Posterior vena cava (tissue), 2 donors: ENCODE measurements at regions of chr9 and their contacts with region 1.

Region 1: DNA sequence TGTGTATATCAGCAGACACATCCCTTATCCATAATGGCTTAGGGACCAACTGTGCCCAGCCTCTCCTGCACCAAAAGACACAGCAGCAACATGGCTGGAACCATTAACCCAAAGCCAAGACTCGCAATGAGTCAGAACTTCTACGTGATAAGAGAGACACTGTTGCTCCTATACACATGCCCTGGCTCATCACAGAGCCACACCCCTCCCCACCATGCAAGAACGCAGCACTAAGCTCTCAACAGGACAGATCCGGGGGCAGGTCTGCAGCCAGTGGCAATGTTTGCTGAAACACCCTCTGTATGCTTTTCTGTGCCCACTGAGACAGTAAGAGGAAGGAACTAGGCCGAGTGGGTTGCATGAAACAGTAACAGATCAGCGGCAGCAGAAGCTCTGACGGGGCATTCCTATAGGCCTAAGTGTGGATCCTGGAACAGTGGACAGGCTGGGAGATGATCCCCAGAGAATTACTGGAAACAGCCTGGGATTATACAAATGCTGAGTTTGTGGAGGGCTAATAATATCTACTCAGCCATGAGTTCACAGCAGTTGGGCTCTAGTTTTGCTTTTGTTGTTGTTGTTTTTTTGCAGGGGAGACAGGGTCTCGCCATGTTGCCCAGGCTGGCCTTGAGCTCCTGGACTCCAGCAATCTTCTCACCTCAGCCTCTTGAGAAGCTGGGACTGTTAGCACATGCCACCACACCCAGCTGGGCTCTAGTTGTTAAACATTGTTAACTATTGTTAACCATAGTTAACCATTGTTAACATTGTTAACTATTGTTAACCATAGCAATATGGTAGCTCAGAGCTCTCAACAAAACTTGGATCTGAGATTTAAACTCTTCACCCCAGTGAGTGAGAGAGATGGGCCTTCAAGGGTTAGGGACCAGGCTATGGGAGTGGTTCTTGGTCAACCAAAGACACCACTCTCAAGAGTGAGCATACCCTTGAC is 41.0 kb downstream of the B4GALT1 start:
- DNase-seq: peak; percentile 77

Region 2: GRCh38 chr9:33092634-33093033 is 33.5 kb before region 1 on chr9:
- intact Hi-C with region 1: no loop called
- DNase-seq: no peak

Region 3: GRCh38 chr9:33144551-33144950 is 18.4 kb after region 1 on chr9:
- intact Hi-C with region 1: loop called in 1 of 2 experiments (anchors 2 kb)
- DNase-seq: no peak

Region 4: DNA sequence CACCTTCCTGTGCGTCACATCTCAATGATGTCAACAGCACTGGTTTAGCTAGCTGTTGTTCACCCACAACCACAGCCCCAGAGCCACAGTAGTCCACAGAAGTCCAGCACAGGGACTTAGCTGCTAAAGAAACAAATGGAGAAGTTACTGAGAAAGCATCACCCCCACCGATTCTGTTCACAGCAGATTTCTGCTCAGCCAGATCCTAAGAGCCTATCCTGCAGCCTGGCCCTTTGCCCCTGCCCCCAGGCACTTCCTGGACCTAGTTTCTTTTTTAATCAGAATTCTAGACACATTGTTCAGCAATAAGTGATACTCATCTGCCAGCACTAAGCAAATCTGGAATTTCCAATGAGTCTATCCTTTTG is 33.6 kb after region 1 on chr9:
- intact Hi-C with region 1: loop called in 1 of 2 experiments (anchors 5 kb)
- DNase-seq: peak; percentile 92

Region 5: DNA sequence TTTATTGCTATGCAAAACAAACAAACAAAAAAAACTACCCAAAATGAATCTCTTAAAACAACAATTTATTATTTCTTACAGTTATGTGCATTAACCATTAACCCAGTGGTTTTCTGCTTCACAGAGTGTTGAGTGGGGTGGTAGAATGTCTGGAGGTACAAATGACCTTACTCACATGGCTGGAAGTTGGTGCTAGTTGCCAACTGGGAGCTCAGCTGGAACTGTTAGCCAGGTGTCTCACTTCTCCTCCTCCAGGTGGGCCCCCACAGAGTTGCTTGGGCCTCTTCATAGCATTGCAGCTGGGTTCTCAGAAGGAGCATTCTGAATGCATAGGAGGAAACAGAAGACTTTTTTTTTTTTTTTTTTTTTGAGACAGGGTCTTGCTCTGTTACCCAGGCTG is 51.5 kb after region 1 on chr9:
- intact Hi-C with region 1: loop called in 1 of 2 experiments (anchors 5 kb)
- DNase-seq: no peak

Region 6: DNA sequence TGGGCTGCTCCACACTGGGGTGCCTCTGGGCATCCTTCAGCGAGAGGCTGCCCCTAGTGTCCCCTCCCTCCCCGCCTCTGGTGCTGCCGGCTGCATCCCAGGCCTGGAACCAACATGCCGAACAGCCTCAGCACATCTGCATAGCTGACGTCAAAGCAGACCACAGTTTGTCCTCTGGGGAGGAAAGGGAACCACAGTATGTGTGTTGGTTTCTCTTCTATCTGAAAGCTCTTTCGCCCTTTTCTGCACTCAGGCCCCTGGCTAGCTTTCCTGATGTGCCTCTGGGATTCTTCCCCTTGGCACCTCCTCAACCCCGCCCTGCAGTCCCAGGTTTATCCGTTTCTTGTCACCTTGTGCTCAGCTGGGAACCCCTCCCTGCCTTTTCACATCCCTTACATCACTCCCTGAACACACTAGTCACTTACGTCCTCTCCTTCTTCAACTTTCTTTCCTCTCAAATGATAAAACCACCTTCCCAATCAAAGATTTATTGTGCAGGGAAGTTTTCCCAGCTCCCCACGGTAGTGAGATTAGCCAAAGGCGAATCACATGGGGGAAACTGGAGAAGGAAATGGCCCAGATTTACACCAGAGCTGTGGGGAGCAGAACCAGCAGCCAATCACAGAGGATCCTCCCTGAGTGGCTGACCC is 76.5 kb after region 1 on chr9:
- intact Hi-C with region 1: loop called in 1 of 2 experiments (anchors 5 kb)
- DNase-seq: peak; percentile 90